ENCODE measurements at regions of chr17 and their contacts with region 1.

Region 1: GRCh38 chr17:78501241-78502036 is 75.8 kb downstream of the DNAH17 start:
- DNase-seq: no peak
- H3K4me3 ChIP-seq: no peak overlapping the region
- H3K27ac ChIP-seq: no peak overlapping the region
- H3K4me1 ChIP-seq: no peaks in the 10 kb centered on the region
- H3K27me3 ChIP-seq: no peaks in the 10 kb centered on the region

Region 2: GRCh38 chr17:76726231-76726775 is 1775.1 kb before region 1 on chr17 and contains the start of gene JMJD6:
- in situ Hi-C with region 1: no loop called
- DNase-seq: peak; percentile 98
- H3K4me3 ChIP-seq: peak within 1 kb of the TSS; percentile 91
- H3K27ac ChIP-seq: peak within 1 kb of the TSS; percentile 98
- H3K4me1 ChIP-seq: peaks cover 20% of the 10 kb centered on the region
- H3K27me3 ChIP-seq: no peaks in the 10 kb centered on the region
- total RNA-seq, gene JMJD6: 19.0 and 33.3 TPM in 2 replicates

Region 3: DNA sequence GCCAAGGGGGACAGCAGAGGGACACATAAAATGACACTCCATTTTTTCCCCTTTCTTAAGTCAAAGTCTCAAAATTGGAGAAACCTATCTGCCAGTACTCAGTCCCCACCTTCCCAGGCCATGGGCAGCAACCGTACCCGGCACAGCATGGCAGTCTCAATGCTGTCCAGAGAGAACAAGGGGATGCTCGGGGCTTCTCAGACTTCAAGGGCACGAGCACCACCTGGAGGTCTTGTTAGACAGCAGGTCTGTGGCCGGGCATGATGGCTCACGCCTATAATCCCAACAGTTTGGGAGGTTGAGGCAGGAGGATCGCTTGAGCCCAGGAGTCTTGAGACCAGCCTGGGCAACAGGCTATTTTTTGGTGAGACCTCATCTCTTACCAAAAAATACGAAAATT is 72.5 kb after region 1 on chr17:
- in situ Hi-C with region 1: no loop called
- DNase-seq: no peak
- H3K4me3 ChIP-seq: no peak overlapping the region
- H3K27ac ChIP-seq: no peak overlapping the region
- H3K4me1 ChIP-seq: no peaks in the 10 kb centered on the region
- H3K27me3 ChIP-seq: no peaks in the 10 kb centered on the region; the same call in 1 of the 2 replicates

Region 4: DNA sequence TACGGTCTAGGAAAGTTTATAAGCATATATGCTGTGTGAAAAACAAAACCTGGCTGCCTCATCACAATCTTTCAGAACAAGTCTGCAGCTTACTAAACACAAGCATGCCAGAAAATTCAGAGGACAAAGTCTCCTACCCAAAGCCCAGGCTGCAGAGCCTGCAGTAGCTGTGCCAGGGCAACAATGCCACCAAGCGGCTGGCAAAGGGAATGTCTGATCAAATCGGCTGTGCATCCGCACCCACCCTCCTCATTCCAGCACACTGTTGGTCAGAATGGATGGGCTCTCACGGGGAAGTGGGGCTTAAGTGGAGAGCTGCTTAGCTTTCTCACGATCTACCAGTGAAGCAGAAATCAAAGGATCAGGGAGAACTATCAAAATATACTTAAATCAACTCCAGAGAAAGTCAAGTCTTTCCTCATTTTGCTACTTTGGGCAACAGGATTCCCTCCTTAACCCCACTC is 207.1 kb after region 1 on chr17:
- in situ Hi-C with region 1: loop called (anchors 10 kb)
- DNase-seq: peak; percentile 88
- H3K4me3 ChIP-seq: no peak overlapping the region
- H3K27ac ChIP-seq: no peak overlapping the region
- H3K4me1 ChIP-seq: peaks cover 4% of the 10 kb centered on the region; the same call in 1 of the 2 replicates
- H3K27me3 ChIP-seq: no peaks in the 10 kb centered on the region

Region 5: DNA sequence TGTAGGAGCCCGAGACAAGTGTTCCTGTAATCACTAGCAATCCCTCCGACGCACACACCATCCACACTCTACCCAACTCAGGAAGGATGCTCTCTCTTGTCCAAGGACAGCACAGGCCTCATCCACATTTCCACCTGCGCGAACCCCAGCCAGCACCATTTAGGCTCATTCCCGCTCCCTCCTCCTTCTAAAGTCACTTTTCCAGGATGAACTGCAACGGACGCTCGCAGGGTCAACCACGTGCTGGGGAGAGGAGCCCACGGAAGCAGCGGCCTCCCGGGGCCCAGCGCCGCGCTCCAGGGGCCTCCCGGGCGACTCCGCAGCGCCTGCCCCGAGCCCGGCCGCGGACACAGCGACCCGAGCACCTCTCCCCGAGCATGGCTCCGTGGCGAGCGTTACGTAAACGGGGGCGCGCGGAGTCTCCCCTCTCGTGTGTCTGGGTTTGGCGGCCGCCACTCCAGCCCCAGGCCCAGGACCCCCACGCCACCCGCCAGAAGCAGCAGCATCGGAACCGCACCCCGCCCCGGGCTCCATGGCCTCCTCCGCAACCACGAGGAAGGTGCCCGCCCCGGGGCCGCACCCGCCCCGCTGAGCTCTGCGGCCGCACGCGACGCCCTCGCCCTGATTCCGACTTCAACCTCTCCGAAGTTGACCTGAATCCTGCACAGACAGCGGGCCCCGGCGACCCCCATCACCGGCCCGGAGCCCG is 338.5 kb after region 1 on chr17:
- in situ Hi-C with region 1: no loop called
- DNase-seq: peak; percentile 83
- H3K4me3 ChIP-seq: peak overlapping the region; percentile 85
- H3K27ac ChIP-seq: peak overlapping the region; percentile 96
- H3K4me1 ChIP-seq: peaks cover 20% of the 10 kb centered on the region
- H3K27me3 ChIP-seq: no peaks in the 10 kb centered on the region

Measured in GM23248 (cell line).